CD8-positive, alpha-beta T cell (primary cell): ENCODE measurements at regions of chr17 and their contacts with region 1.

Region 1: DNA sequence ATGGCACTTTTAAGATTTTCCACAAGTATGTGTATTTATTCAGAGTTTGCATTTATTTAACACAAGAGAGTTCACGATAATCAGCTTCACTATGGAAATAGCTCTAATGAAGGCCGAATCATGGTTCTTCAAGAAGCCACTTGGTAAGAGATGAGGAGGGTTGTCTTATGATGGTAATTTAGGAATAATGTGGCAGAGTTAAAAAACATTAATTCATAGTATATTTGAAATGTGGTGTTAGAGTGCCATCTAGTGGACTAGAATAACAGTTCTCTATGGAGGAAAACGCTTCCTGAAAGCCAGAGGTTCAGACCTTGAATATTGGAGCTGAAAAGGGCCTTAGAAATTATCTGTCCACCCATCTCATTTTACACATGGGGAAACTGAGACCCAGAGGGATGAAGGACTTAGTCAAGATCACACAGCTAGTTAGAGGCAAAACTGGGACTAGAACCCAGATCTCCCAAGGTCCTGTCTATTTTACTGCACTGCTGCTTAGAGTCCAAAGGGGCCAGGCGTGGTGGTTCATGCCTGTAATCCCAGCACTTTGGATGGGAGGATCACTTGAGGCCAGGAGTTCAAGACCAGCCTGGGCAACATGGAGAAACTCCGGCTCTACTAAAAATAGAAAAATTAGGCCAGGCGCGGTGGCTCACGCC is 33.8 kb upstream of the KPNB1 start:
- DNase-seq: peak in 2 of 9 experiments; percentile 62 to 73
- ATAC-seq: peak; percentile 44
- H3K4me3 ChIP-seq: no peak overlapping the region
- H3K4me3 Mint-ChIP-seq: no peak overlapping the region
- H3K27ac ChIP-seq: no peak overlapping the region
- H3K27ac Mint-ChIP-seq: no peak overlapping the region
- H3K4me1 ChIP-seq: no peaks in the 10 kb centered on the region
- H3K4me1 Mint-ChIP-seq: peaks cover 2% of the 10 kb centered on the region
- H3K27me3 ChIP-seq: no peaks in the 10 kb centered on the region
- H3K27me3 Mint-ChIP-seq: no peaks in the 10 kb centered on the region
- CTCF ChIP-seq: peak; percentile 84

Region 2: GRCh38 chr17:46995841-46996571 is 619.9 kb before region 1 on chr17:
- CTCF ChIA-PET with region 1: no interaction called
- POLR2A ChIA-PET with region 1: no interaction called
- intact Hi-C with region 1: loop called in 1 of 2 experiments (anchors 2 kb)
- DNase-seq: no peak
- ATAC-seq: no peak
- H3K4me3 ChIP-seq: no peak overlapping the region
- H3K4me3 Mint-ChIP-seq: no peak overlapping the region
- H3K27ac ChIP-seq: no peak overlapping the region
- H3K27ac Mint-ChIP-seq: no peak overlapping the region
- H3K4me1 ChIP-seq: peaks cover 1% of the 10 kb centered on the region
- H3K4me1 Mint-ChIP-seq: no peaks in the 10 kb centered on the region
- H3K27me3 ChIP-seq: no peaks in the 10 kb centered on the region
- H3K27me3 Mint-ChIP-seq: no peaks in the 10 kb centered on the region
- CTCF ChIP-seq: no peak

Region 3: GRCh38 chr17:47229535-47230443 is 386.1 kb before region 1 on chr17:
- CTCF ChIA-PET with region 1: interaction called, 27 read pairs
- POLR2A ChIA-PET with region 1: no interaction called
- intact Hi-C with region 1: loop called (anchors 1 kb)
- DNase-seq: peak; percentile 31 to 87 (median 67)
- ATAC-seq: peak; percentile 98
- H3K4me3 ChIP-seq: peak overlapping the region in 1 of 2 experiments; percentile 13
- H3K4me3 Mint-ChIP-seq: peak overlapping the region; percentile 69
- H3K27ac ChIP-seq: no peak overlapping the region
- H3K27ac Mint-ChIP-seq: no peak overlapping the region
- H3K4me1 ChIP-seq: peaks cover 3% of the 10 kb centered on the region
- H3K4me1 Mint-ChIP-seq: peaks cover 11% of the 10 kb centered on the region
- H3K27me3 ChIP-seq: no peaks in the 10 kb centered on the region
- H3K27me3 Mint-ChIP-seq: no peaks in the 10 kb centered on the region
- CTCF ChIP-seq: peak; percentile 98

Region 4: GRCh38 chr17:47363171-47363570 is 252.7 kb before region 1 on chr17:
- CTCF ChIA-PET with region 1: interaction called, 22 read pairs
- POLR2A ChIA-PET with region 1: no interaction called
- intact Hi-C with region 1: loop called in 1 of 2 experiments (anchors 1 kb)
- DNase-seq: no peak
- ATAC-seq: no peak
- H3K4me3 ChIP-seq: no peak overlapping the region
- H3K4me3 Mint-ChIP-seq: no peak overlapping the region
- H3K27ac ChIP-seq: no peak overlapping the region
- H3K27ac Mint-ChIP-seq: no peak overlapping the region
- H3K4me1 ChIP-seq: no peaks in the 10 kb centered on the region
- H3K4me1 Mint-ChIP-seq: no peaks in the 10 kb centered on the region
- H3K27me3 ChIP-seq: no peaks in the 10 kb centered on the region
- H3K27me3 Mint-ChIP-seq: no peaks in the 10 kb centered on the region
- CTCF ChIP-seq: no peak

Region 5: DNA sequence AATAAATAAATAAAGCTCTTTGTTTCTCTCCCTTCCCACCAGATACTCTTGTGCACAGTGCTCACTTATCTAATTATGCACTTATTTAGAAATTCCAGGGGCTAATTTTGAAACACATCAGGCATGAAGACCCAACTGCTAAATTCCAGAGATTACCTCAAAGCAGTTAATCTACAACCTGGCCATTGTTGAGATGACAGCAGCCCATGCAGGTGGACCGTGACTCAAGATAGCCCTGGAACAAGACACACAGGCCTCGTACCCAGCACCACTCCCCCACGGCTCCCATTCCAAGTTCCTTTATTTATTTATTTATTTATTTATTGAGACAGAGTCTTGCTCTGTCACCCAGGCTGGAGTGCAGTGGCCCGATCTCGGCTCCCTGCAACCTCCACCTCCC is 145.1 kb before region 1 on chr17:
- CTCF ChIA-PET with region 1: no interaction called
- POLR2A ChIA-PET with region 1: no interaction called
- intact Hi-C with region 1: no loop called
- DNase-seq: no peak
- ATAC-seq: no peak
- H3K4me3 ChIP-seq: no peak overlapping the region
- H3K4me3 Mint-ChIP-seq: no peak overlapping the region
- H3K27ac ChIP-seq: no peak overlapping the region
- H3K27ac Mint-ChIP-seq: no peak overlapping the region
- H3K4me1 ChIP-seq: no peaks in the 10 kb centered on the region
- H3K4me1 Mint-ChIP-seq: no peaks in the 10 kb centered on the region
- H3K27me3 ChIP-seq: no peaks in the 10 kb centered on the region
- H3K27me3 Mint-ChIP-seq: no peaks in the 10 kb centered on the region
- CTCF ChIP-seq: no peak

Region 6: DNA sequence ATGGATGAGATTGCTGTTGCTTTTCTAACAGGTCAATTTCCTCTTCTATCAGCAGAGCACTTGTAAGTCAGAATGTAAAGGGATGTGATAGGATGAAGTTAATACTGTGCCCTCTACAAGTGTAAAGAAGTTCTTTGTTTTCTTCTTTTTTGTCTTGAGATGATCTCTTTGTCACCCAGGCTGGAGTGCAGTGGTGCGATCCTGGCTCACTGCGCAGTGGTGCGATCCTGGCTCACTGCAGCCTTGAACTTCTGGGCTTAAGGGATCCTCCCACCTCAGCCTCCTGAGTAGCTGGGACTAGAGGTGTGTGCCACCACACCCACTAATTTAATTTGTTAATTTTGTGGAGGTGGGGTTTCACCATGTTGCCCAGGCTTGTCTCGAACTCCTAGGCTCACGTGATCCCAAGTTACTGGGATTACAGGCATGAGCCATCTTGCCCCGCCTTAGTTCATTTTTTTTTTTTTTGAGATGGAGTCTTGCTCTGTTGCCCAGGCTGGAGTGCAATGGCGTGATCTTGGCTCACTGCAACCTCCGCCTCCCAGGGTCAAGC is 12.2 kb after region 1 on chr17:
- CTCF ChIA-PET with region 1: interaction called, 14 read pairs
- POLR2A ChIA-PET with region 1: no interaction called
- intact Hi-C with region 1: no loop called
- DNase-seq: no peak
- ATAC-seq: no peak
- H3K4me3 ChIP-seq: no peak overlapping the region
- H3K4me3 Mint-ChIP-seq: no peak overlapping the region
- H3K27ac ChIP-seq: no peak overlapping the region
- H3K27ac Mint-ChIP-seq: no peak overlapping the region
- H3K4me1 ChIP-seq: no peaks in the 10 kb centered on the region
- H3K4me1 Mint-ChIP-seq: no peaks in the 10 kb centered on the region
- H3K27me3 ChIP-seq: no peaks in the 10 kb centered on the region
- H3K27me3 Mint-ChIP-seq: no peaks in the 10 kb centered on the region
- CTCF ChIP-seq: no peak